HEK293T (cell line): ENCODE measurements at regions of chr1 and their contacts with region 1.

Region 1: GRCh38 chr1:23559136-23559984 is at the start of gene ID3:
- DNase-seq: peak; percentile 70

Region 2: GRCh38 chr1:23428136-23428905 is 131.0 kb before region 1 on chr1:
- CTCF ChIA-PET with region 1: no interaction called
- POLR2A ChIA-PET with region 1: no interaction called
- DNase-seq: no peak

Region 3: GRCh38 chr1:23548704-23549143 is 10.6 kb before region 1 on chr1:
- CTCF ChIA-PET with region 1: interaction called, 4 read pairs
- POLR2A ChIA-PET with region 1: interaction called, 11 read pairs
- DNase-seq: no peak

Region 4: GRCh38 chr1:23591460-23592208 is 32.3 kb after region 1 on chr1:
- CTCF ChIA-PET with region 1: no interaction called
- POLR2A ChIA-PET with region 1: interaction called, 11 read pairs
- DNase-seq: no peak

Region 5: DNA sequence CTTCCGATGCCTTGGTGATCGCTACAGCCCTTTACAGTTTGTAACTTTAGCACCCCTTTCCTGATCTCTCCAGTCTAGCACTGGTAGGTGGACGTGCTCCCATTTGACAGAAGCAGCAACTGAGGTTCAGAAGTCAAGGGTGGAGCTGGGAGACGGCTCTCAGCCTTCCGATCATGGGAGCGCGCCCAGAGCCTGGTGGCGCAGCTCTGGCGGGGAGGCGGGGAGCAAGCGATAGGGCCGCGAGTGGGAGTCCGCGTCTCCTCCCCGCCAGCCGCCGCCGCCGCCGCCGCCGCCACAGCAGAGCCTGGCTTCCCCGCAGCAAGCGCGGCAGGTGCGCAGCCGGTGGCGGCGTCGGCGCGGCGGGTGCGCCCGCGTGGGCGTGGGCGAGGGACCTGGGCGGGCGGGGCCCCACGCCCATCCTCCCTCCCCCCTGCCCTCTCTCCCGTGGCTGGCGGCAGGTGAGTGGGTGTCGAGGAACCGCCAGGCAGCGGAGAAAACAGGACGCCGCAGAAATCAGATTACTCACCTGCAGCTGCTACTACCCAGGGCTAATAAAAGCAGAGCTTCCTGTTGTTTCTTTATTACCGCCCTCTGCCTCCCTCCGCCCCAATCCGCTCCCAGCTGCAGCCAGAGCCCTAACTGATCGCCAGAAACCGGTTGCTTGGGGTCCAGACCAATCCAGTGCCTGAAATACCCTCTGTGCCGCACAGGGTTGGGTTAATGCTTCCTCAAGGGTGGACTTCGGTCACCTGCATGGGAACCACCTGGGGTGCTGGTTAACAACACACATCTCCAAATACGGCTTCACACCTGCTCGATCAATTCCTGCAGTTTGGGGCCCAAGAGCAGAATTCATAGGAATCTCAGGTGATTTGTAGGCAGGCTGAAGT is 60.2 kb after region 1 on chr1:
- CTCF ChIA-PET with region 1: no interaction called
- POLR2A ChIA-PET with region 1: interaction called, 24 read pairs
- DNase-seq: peak; percentile 33

Region 6: DNA sequence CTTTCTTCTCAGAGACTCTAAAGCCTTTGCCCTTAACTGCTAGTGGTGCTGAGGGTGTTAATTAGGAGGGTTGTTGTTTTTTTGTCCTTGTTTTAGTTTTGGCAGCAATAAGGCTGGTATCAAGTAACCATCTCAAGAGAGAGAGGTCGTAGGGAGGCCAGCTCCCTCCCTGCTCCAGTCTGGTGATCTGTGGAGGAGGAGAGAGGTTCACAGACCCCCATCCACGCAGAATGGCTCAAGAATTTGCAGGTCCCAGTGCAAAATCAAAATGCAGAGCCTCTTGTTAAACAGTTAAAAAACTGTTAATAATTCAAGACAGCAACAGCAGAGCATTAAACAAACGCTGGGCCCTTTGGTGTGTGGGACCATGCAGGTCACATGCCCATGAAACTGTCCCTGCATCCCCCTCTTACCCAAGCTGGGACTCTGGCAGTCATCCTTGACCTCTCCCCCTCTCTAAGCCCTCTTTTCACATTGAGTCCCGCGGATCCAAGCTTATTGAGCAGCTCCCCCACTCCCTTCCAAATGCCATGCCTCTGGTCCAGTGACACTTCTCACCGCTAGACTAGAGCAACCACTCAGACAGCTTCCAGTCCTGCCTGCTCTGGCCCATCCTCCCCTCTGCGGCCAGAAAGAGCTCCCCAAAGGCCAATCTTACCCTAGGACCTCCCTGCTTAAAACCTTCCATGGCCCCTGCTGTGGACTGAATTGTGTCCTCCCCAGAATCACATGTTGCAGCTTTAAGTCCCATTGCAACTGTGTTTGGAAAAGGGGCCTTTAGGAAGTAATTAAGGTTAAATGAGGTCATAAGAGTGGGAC is 84.6 kb after region 1 on chr1:
- CTCF ChIA-PET with region 1: no interaction called
- POLR2A ChIA-PET with region 1: interaction called, 33 read pairs
- DNase-seq: no peak